ENCODE measurements at regions of chr4 and their contacts with region 1.

Region 1: DNA sequence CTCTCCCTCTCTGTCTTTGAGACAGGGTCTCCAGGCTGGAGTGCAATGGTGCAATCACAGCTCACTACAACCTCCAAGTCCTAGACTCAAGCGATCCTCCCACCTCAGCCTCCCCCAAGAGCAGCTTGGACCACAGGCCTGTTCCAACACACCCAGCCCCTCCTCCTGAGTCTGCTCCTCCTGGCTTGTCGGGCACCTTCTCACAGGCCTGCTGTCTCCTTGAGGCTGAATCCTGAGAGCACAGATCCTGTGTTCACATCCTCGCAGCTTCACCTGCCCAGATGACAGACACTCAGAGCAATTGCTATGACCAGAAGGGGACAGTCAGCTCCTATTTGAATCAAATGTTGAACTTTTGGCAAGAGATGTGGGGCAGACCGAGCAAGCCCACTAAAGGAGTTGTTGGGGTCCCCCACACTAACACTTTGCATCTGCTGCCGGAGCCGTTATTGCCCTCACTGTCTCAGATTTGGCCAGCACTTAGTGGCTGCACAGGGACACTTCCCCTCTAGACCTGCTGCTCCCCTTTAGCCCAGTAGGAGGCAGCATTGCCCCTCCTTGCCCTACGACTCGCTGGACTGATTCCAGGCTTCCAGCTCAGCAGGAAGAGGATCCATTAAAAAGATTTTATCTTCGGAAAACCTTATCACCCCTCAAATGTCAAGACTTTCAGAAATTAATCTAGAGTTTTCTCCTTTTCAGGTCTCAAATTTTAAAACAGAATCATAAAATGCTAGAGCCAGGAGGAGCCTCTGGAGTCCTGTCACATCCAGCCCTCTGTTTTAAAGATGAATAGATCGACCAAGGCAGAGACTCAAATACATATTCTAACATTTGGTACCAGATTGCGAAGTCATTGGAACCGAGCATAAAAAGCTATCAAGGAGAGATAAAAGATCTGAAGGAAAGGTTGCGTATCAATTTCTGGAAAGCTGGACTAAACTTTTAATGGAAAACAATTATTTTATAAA is 113.7 kb downstream of the USP46 start:
- DNase-seq: no peak
- H3K4me3 ChIP-seq: no peak overlapping the region
- H3K27me3 ChIP-seq: peaks cover 3% of the 10 kb centered on the region; the same call in 1 of the 2 replicates
- CTCF ChIP-seq: peak; percentile 97

Region 2: GRCh38 chr4:52368895-52369294 is 176.5 kb before region 1 on chr4:
- CTCF ChIA-PET with region 1: no interaction called
- POLR2A ChIA-PET with region 1: no interaction called
- DNase-seq: no peak
- H3K4me3 ChIP-seq: no peak overlapping the region
- H3K27me3 ChIP-seq: peaks cover 1% of the 10 kb centered on the region; the same call in 1 of the 2 replicates
- CTCF ChIP-seq: no peak

Region 3: GRCh38 chr4:52588097-52588782 is 42.9 kb after region 1 on chr4:
- CTCF ChIA-PET with region 1: interaction called, 10 read pairs
- POLR2A ChIA-PET with region 1: no interaction called
- DNase-seq: no peak
- H3K4me3 ChIP-seq: no peak overlapping the region
- H3K27me3 ChIP-seq: no peaks in the 10 kb centered on the region
- CTCF ChIP-seq: peak; percentile 54

Region 4: DNA sequence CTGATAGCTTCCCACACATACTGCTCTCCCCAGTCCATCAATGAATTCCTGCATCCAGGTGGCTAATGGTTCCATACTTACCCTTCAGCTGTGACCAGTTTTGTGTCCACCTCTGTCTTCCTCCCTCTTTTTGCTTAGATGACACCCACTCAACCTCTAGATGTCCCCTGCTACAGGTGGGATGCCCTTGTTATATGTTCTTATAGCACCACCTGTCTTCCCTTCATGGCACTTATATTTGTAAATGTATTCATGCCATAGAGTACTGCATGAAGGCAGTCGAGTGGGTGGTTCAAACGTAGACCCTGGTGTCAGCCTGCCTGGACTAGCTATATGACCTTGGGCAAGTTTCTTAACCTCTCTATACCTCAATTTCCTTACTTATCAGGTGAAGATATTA is 120.2 kb after region 1 on chr4:
- CTCF ChIA-PET with region 1: interaction called, 20 read pairs
- POLR2A ChIA-PET with region 1: no interaction called
- DNase-seq: no peak
- H3K4me3 ChIP-seq: no peak overlapping the region
- H3K27me3 ChIP-seq: peaks cover 4% of the 10 kb centered on the region; the same call in 1 of the 2 replicates
- CTCF ChIP-seq: no peak

Region 5: DNA sequence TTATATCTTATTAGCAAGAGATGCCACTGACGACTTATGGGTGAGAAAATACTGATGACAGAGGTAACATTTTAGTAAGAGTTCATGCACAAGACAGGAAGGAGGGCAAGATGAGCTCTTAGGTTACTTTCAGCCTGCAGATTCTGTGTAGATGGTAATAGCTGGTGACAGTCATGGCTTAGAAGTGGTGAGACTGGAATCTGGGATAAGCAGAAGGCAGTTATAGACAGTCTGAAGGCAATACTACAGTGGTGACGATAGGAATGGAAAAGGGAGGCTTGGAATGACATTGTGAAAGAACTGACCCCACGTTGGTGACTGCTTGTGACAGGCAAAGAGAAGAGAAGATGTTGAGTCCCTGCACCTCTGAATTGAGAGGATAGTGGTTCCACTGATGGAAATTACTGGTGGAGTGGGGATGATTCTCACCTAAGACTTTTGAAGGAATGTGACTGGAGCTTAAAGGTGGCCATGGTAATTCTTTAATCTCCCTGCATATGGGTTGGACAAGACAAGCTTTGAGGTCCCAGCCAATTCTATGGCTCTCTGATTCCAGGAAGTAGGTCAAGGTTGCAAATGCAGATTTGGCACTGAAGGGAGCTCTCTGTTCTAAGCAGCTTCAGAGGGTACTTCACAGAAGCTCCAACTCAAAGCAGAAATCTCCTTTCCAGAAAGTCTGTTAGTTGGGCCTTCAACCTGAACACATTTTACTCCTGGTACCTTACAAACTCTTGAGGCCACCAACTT is 416.5 kb after region 1 on chr4:
- CTCF ChIA-PET with region 1: interaction called, 10 read pairs
- POLR2A ChIA-PET with region 1: no interaction called
- DNase-seq: no peak
- H3K4me3 ChIP-seq: no peak overlapping the region
- H3K27me3 ChIP-seq: no peaks in the 10 kb centered on the region
- CTCF ChIP-seq: no peak

Region 6: DNA sequence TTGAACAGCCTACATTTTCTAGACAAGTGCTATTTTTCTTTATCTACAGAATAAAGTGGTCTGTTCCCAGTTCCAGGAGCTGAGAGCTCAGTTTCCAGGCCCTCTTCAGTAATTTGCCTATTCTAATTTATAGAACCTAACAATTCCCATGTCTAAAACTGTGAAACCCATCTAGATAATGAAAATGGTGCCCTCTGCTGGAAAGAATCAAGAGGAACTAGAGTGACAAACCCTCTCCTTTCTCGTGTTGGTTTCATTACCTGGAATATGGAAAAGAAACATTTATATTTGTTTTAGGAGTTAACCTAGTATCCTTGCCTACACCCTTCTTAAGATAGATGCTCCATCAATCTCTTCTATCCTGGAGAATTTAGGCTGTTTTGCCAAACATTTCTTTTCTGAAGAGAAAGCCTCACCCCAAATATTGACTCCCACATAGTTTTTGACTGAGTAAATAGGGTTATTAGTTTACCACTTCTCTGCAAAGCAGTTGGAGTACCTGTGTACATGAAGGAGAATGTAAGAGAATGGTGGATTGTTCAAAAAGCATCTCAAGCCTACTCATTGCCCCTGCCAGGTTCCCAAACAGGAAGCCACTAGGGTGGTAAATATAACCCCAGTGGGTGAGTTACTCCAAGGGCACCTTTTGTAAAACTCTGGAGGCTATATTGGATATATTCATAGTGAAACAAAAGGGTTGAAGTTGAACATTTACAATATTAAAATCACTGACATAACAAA is 438.3 kb after region 1 on chr4:
- CTCF ChIA-PET with region 1: interaction called, 105 read pairs
- POLR2A ChIA-PET with region 1: no interaction called
- DNase-seq: no peak
- H3K4me3 ChIP-seq: no peak overlapping the region
- H3K27me3 ChIP-seq: no peaks in the 10 kb centered on the region
- CTCF ChIP-seq: peak; percentile 62